HEK293T (cell line): ENCODE measurements at regions of chr1 and their contacts with region 1.

Region 1: DNA sequence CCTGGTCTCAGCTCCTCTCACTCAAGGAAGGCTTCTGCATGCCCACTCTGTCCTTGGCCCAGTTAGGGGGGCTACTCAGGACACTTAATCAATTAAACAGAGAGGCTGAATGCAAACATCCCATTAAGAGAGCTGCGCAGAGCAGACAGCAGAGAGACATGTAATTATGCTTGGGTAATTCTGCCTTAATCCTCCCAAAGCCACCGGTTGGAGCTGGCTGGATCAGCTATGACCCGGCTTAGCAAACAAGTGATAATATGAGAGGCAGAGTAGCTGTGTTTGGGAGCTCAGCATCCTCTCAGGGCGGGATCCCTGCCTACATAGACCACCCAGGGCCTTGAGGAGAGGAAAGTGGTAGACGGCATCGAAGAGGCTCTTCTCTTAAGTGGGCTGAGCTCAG is 183.2 kb downstream of the GRIK3 start:
- DNase-seq: no peak

Region 2: DNA sequence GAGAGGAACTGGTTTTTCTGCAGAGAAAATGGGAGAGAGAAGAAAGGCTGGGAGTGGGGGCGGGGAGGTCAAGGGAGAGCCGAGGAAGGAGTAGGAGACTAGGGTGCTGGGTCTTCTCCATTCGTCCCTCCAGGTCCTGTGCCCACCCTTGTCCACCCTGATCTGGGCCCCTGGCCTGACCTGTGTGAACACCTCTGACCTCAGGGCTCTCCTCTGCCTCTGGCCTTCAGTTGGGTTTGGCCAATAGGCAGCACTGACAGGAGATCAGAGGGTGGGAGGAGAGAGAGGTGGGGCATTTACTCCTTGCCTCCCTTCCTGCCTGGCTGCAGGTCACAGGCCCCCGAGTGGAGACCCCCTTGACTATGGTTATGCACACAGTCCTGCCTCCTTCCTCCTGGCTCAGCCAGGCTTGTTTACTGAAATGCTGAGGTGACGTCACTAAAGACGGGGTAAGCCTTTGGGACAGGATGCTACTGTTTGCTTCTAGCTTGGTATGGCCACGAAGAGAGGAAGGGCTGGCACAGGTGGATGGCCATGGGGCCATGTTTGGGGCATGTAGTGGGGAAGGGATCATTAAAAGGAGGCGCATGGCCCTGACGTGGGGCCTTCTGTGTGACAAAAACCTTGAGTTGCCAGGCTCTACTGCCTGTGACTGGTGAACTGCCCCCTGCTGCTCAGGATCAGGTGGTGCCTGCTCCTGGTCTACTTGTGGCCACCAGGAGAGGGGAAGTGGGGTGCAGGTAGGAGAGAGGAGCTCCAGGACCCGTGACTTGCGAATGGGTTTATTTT is 119.7 kb before region 1 on chr1:
- CTCF ChIA-PET with region 1: no interaction called
- POLR2A ChIA-PET with region 1: no interaction called
- DNase-seq: no peak

Region 3: GRCh38 chr1:36836196-36836883 is 14.7 kb before region 1 on chr1:
- CTCF ChIA-PET with region 1: no interaction called
- POLR2A ChIA-PET with region 1: no interaction called
- DNase-seq: no peak

Region 4: DNA sequence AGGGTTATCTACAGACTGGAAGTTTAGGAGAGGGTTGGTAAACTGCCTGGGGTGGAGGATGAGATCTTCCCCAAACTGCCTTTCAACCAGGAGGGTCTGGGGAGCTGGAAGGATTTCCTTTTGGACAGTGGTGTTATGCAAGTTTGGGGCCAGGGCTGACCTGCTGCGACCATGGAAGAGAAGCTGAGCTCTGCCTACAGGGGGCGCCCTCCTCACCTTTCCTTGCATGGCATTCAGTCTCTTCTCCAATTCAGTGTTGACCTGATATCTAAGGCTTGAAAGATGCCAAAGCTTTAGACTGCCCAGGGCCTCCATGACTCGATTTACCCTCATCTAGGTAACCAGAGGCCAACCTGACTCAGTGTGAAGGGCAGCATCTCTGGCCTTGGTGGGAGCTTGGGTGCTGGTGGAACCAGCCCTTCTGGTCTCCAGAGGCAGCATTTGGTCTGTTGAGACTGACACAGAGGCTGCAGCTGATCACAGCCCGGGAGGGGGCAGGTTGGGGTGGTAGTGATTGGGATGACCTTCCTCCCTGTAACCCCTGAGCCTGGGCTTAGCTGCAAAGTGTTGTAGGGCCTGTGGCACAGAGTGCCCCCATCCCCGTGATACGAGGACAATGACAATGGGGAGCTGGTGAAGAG is 13.2 kb after region 1 on chr1:
- CTCF ChIA-PET with region 1: interaction called, 15 read pairs
- POLR2A ChIA-PET with region 1: no interaction called
- DNase-seq: peak; percentile 61